GM10248 (cell line): ENCODE measurements at regions of chr12 and their contacts with region 1.

Region 1: GRCh38 chr12:66693901-66694675 is 15.2 kb upstream of the GRIP1 start:
- DNase-seq: peak; percentile 43
- CTCF ChIP-seq: peak; percentile 57

Region 2: GRCh38 chr12:66269757-66270383 is 424.2 kb before region 1 on chr12:
- CTCF ChIA-PET with region 1: interaction called, 58 read pairs
- POLR2A ChIA-PET with region 1: no interaction called
- DNase-seq: peak; percentile 37
- CTCF ChIP-seq: peak; percentile 37

Region 3: DNA sequence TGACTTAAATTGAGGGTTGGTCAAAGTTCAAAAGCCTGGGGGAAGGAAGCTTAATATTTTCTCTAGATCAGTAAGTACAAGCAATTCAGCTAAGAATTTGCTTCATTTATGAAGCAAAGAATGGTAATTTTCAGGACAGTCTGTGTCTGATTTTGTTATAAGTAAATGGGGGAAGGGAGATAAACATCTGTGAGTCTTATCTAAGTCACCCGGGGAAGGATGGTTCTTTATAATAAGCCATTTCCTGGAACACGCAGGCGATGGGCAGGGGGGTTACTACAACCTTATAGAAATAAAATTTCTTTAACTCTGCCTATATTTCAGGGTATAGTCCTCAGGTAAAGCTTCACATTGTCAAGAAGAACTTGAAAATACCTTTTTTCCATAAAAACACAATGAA is 348.9 kb before region 1 on chr12:
- CTCF ChIA-PET with region 1: interaction called, 41 read pairs
- POLR2A ChIA-PET with region 1: no interaction called
- DNase-seq: no peak
- CTCF ChIP-seq: no peak

Region 4: DNA sequence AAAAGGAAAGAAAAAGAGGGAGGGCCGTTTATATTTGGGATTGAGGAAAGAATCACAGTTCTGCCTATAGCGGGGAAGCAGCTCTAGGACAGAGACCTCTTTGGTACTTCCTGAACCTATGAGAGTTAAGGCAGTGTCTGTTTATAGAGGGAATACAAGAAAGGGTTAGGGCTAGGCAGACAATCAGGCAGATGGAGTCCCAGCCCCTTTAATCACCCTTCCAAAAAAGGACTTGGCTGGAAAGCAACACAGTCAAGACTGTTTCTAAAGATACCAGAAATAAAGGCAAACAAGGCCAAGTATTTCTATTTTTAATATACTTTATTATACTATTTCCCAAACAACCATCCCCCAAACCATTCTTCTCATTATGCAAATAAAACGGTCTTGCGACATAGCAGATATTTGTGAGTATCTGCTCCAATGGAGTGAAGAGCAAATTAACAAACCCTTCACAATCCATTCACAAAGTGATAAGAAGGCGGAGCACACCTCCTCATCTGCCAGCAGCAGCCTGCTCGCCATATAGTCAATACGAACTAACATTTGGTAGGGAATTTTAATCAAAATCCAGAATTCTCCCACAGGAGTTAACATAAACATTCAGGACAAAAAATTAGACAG is 14.5 kb before region 1 on chr12:
- CTCF ChIA-PET with region 1: interaction called, 114 read pairs
- POLR2A ChIA-PET with region 1: no interaction called
- DNase-seq: no peak
- CTCF ChIP-seq: no peak

Region 5: GRCh38 chr12:66719862-66720261 is 25.8 kb after region 1 on chr12:
- CTCF ChIA-PET with region 1: interaction called, 10 read pairs
- POLR2A ChIA-PET with region 1: no interaction called
- DNase-seq: no peak
- CTCF ChIP-seq: no peak